ENCODE measurements at regions of chr15 and their contacts with region 1.

Region 1: DNA sequence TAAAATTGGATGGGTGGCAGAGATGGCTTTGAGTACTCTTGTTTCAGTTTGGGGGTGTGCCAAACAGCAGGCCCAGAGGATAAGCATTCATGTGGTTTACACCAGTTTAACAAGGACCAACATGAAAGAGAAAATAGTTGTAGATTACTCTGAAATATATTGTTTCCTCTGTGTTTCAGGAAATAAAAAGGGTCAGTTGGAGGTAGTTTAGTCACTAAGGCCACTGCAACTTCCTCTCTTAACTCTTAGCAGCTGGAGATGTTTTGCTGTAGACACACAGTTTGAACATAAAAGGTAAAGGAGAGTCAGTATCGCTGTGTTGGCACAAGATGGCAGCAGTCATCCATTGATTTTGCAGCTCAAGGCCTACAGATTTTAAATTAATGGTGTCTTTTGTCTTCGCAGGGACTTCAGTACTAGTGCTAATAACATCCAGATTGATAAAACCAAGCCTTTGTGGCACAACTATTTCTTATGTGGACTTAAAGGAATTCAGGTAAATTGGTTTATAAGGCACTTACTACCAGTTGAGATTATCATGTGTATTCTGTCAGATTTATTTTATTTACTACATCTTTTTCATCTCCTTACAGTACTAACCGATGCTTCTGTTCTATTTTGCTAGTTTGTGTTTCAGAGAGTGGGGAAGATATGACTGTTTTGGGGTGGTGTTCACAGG is 65.5 kb downstream of the GALK2 start:
- DNase-seq: no peak

Region 2: DNA sequence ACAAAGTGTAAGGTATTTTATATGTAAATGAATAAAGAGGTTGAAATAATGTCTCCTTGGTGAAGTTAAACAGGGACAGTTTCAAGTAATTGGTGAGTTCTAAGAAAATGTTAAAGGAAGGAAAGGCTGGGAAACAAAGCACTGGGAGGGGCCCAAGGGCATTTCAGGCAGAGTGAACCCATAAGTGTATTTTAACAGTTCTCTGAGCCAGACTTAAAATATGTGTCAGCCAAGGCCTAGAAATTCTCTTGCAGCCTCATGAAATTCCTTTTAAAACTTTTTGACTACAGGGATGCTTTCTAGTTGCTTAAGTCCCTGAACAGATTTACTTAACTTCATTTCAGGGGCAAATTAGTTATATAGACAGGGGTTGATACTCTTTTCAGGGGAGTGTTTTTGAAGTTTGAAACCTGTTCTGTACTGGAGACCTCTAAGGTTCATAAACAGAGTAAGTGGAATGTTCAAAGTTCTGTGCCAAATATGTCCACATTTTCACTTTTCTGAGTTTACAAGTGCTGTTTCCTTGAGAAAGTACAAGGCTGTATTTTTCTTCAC is 12.0 kb after region 1 on chr15:
- intact Hi-C with region 1: no loop called
- DNase-seq: no peak

Region 3: GRCh38 chr15:49279521-49280456 is 44.2 kb after region 1 on chr15:
- intact Hi-C with region 1: loop called in 1 of 2 experiments (anchors 2 kb)
- DNase-seq: no peak

Region 4: GRCh38 chr15:49415638-49416037 is 180.1 kb after region 1 on chr15:
- intact Hi-C with region 1: loop called in 1 of 2 experiments (anchors 10 kb)
- DNase-seq: no peak

Region 5: GRCh38 chr15:50116473-50116872 is 880.9 kb after region 1 on chr15:
- intact Hi-C with region 1: no loop called
- DNase-seq: no peak

Region 6: GRCh38 chr15:50145451-50145872 is 909.9 kb after region 1 on chr15:
- intact Hi-C with region 1: loop called in 1 of 2 experiments (anchors 10 kb)
- DNase-seq: no peak

Region 7: DNA sequence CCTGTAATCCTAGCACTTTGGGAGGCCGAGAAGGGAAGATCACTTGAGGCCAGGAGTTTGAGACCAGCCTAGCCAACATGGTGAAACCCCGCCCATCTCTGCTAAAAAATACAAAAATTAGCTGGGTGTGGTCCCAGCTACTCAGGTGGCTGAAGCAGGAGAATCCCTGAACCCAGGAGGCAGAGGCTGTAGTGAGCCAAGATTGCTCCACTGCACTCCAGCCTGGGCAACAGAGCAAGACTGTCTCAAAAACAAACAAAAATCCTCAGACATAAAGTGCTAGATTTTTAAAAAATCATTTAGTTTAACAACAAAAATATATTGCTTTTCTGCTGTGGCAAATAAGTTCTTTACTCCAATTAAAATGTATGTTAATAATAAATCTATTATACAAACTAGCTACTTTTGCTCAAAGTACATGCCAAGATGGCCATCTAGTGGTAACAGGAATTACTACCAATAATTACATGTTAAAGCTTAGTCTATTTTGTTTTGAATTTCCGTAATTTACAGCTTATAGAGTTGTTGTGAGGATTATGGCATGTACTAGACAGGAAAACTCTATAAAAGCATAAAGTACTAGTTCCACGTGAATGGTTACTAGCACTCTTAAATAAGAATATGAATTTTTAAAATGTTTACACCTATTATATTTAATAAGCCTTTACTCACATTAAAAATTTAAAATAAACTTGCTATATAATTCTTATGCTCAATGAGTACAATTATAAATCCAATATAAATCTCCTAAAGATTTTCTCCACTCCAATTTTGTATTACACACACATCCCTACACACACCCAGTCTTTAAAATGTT is 1080.4 kb after region 1 on chr15:
- intact Hi-C with region 1: loop called in 1 of 2 experiments (anchors 10 kb)
- DNase-seq: no peak

Measured in posterior vena cava (tissue), 2 donors.